Activated B cell treated with CpG ODN at 0.5 μM for 24 hours (primary cell): ENCODE measurements at regions of chr3 and their contacts with region 1.

Region 1: GRCh38 chr3:15268033-15268631 is 62.1 kb downstream of the CAPN7 start:
- DNase-seq: peak; percentile 70
- ATAC-seq: peak; percentile 40
- H3K4me3 Mint-ChIP-seq: peak overlapping the region; percentile 46
- H3K27ac Mint-ChIP-seq: no peak overlapping the region
- H3K4me1 Mint-ChIP-seq: peaks cover 89% of the 10 kb centered on the region
- H3K27me3 Mint-ChIP-seq: no peaks in the 10 kb centered on the region
- CTCF ChIP-seq: peak; percentile 65

Region 2: GRCh38 chr3:13452490-13453335 is 1815.4 kb before region 1 on chr3:
- CTCF ChIA-PET with region 1: no interaction called
- POLR2A ChIA-PET with region 1: no interaction called
- intact Hi-C with region 1: no loop called
- DNase-seq: peak; percentile 28
- ATAC-seq: no peak
- H3K4me3 Mint-ChIP-seq: peak overlapping the region; percentile 84
- H3K27ac Mint-ChIP-seq: peak overlapping the region; percentile 89
- H3K4me1 Mint-ChIP-seq: peaks cover 18% of the 10 kb centered on the region
- H3K27me3 Mint-ChIP-seq: no peaks in the 10 kb centered on the region
- CTCF ChIP-seq: no peak

Region 3: GRCh38 chr3:15241341-15241740 is 26.8 kb before region 1 on chr3:
- CTCF ChIA-PET with region 1: interaction called, 11 read pairs
- POLR2A ChIA-PET with region 1: no interaction called
- intact Hi-C with region 1: no loop called
- DNase-seq: no peak
- ATAC-seq: peak; percentile 65
- H3K4me3 Mint-ChIP-seq: no peak overlapping the region
- H3K27ac Mint-ChIP-seq: no peak overlapping the region
- H3K4me1 Mint-ChIP-seq: no peaks in the 10 kb centered on the region
- H3K27me3 Mint-ChIP-seq: no peaks in the 10 kb centered on the region
- CTCF ChIP-seq: no peak

Region 4: GRCh38 chr3:15319575-15319974 is 51.4 kb after region 1 on chr3:
- CTCF ChIA-PET with region 1: interaction called, 9 read pairs
- POLR2A ChIA-PET with region 1: interaction called, 6 read pairs
- intact Hi-C with region 1: loop called (anchors 2 kb)
- DNase-seq: no peak
- ATAC-seq: no peak
- H3K4me3 Mint-ChIP-seq: no peak overlapping the region
- H3K27ac Mint-ChIP-seq: peak overlapping the region; percentile 65
- H3K4me1 Mint-ChIP-seq: peaks cover 92% of the 10 kb centered on the region
- H3K27me3 Mint-ChIP-seq: no peaks in the 10 kb centered on the region
- CTCF ChIP-seq: no peak

Region 5: GRCh38 chr3:15361494-15362212 is 93.5 kb after region 1 on chr3:
- CTCF ChIA-PET with region 1: interaction called, 26 read pairs
- POLR2A ChIA-PET with region 1: interaction called, 17 read pairs
- intact Hi-C with region 1: loop called (anchors 1 kb)
- DNase-seq: peak; percentile 44
- ATAC-seq: peak; percentile 70
- H3K4me3 Mint-ChIP-seq: peak overlapping the region; percentile 64
- H3K27ac Mint-ChIP-seq: peak overlapping the region; percentile 74
- H3K4me1 Mint-ChIP-seq: peaks cover 65% of the 10 kb centered on the region
- H3K27me3 Mint-ChIP-seq: no peaks in the 10 kb centered on the region
- CTCF ChIP-seq: no peak

Region 6: GRCh38 chr3:15399970-15400369 is 131.8 kb after region 1 on chr3:
- CTCF ChIA-PET with region 1: interaction called, 156 read pairs
- POLR2A ChIA-PET with region 1: interaction called, 9 read pairs
- intact Hi-C with region 1: loop called (anchors 1 kb)
- DNase-seq: no peak
- ATAC-seq: no peak
- H3K4me3 Mint-ChIP-seq: no peak overlapping the region
- H3K27ac Mint-ChIP-seq: no peak overlapping the region
- H3K4me1 Mint-ChIP-seq: peaks cover 40% of the 10 kb centered on the region
- H3K27me3 Mint-ChIP-seq: no peaks in the 10 kb centered on the region
- CTCF ChIP-seq: no peak

Region 7: DNA sequence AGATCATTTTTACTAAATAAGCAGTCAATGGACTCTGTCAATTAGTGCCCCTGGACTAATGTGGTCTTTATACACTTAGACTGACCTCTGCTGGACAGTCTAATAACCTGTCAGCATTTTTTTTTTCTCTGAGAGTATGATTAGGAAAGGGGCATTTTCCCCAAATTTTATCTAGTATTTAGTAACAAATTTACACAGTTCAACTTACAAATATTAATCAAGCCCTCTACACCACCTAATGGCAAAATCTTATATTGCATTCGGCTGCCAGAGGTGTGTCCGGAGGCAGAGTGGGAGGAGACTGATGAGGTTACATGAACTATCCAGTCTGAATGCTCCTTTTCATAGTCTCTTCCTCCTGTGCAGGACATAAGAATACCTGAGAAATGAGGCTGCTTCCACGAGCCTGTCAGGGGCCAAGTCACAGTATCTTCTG is 289.4 kb after region 1 on chr3:
- CTCF ChIA-PET with region 1: interaction called, 12 read pairs
- POLR2A ChIA-PET with region 1: interaction called, 6 read pairs
- intact Hi-C with region 1: loop called (anchors 1 kb)
- DNase-seq: peak; percentile 19
- ATAC-seq: peak; percentile 81
- H3K4me3 Mint-ChIP-seq: no peak overlapping the region
- H3K27ac Mint-ChIP-seq: no peak overlapping the region
- H3K4me1 Mint-ChIP-seq: peaks cover 29% of the 10 kb centered on the region
- H3K27me3 Mint-ChIP-seq: no peaks in the 10 kb centered on the region
- CTCF ChIP-seq: no peak